Right ventricle myocardium inferior (tissue), 1 donor: ENCODE measurements at regions of chr10 and their contacts with region 1.

Region 1: DNA sequence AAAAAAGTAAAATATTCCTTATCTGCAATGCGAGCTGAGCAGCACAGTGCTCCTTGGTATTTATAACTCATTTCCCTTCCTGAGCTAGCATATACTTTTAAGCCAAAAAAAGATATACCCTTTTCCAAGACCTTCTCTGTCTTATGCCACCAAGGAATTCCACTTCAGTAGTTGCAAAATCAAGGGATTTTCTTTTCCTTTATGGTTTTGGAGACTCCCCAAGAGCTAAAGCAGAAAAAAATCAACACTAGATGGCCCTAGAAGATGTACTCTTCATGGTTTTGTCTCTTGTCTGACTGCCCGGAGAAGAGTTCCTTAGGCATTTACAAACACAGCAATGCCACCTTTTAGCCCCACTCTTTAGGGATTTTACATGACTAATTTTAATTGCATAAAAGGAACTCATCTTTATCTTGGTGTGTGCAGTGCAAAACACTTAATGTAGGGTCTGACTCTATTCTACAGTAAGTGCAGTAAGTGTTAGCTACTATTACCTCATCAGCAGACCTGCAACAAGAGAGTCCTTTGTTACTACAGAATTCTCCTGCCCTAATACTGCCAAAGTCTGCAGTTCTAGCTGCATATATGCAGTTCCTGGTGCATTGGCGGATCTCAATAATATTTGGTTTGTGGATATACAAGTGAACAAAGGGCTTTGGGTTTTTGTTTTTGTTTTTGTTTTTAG is 443.3 kb downstream of the GFRA1 start:
- DNase-seq: no peak
- ATAC-seq: peak; percentile 55

Region 2: GRCh38 chr10:115638246-115638645 is 191.4 kb before region 1 on chr10:
- intact Hi-C with region 1: no loop called
- DNase-seq: no peak
- ATAC-seq: no peak

Region 3: GRCh38 chr10:115948465-115948864 is 118.8 kb after region 1 on chr10:
- intact Hi-C with region 1: loop called (anchors 10 kb)
- DNase-seq: no peak
- ATAC-seq: peak; percentile 28